Activated naive CD8-positive, alpha-beta T cell treated with anti-CD3 and anti-CD28 coated beads, Interleukin-2, amount 10 ng/mL, durations not matched to agents 7 days and 5 days (primary cell): ENCODE measurements at regions of chr2 and their contacts with region 1.

Region 1: DNA sequence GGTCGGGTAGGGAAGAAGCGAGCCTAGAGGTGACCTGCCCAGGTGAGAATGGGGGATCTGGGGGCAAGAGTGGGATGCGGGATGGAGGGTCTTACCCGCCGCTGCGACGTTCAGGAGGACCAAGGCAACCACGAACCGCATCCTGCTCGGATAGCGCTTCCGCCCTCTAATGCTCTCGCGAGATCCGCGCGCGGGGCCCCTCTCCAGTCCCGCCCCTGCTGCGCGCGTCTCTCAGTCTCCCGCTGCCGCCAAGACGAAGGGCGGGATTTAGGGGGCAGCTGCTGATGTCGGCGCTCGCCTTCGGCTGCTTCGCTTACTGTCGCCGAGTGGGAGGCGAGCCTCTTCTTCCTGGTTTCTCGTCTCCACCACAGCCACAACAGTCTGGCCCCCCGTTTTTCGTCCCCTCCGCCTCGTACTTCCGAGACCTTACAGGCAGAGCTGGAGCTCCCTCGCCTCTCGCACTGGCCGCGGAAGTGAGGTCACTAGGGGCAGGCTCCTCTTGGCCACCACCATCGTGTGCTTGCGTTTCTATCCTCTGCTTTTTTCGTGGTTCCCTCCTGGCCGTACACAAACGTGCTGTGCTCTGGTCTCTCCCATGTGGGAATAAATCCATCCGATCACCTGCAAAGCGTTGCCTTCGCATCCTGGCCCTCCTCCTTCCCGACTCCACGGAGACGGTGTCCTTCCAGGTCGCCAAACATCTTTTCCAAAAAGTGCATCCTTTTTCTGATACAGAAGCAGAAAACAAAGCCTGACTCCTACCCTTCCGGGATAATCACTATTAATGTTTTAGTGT is at the start of gene TGOLN2:
- DNase-seq: peak; percentile 97
- ATAC-seq: peak; percentile 84
- H3K4me3 Mint-ChIP-seq: peak within 1 kb of the TSS; percentile 99
- H3K27ac Mint-ChIP-seq: peak within 1 kb of the TSS; percentile 100
- H3K4me1 Mint-ChIP-seq: peaks cover 25% of the 10 kb centered on the region
- H3K27me3 Mint-ChIP-seq: no peaks in the 10 kb centered on the region
- total RNA-seq, gene TGOLN2: 144 to 148 TPM

Region 2: GRCh38 chr2:85273738-85274731 is 54.0 kb before region 1 on chr2:
- POLR2A ChIA-PET with region 1: no interaction called
- DNase-seq: no peak
- ATAC-seq: no peak
- H3K4me3 Mint-ChIP-seq: no peak overlapping the region
- H3K27ac Mint-ChIP-seq: no peak overlapping the region
- H3K4me1 Mint-ChIP-seq: no peaks in the 10 kb centered on the region
- H3K27me3 Mint-ChIP-seq: peaks cover 32% of the 10 kb centered on the region

Region 3: DNA sequence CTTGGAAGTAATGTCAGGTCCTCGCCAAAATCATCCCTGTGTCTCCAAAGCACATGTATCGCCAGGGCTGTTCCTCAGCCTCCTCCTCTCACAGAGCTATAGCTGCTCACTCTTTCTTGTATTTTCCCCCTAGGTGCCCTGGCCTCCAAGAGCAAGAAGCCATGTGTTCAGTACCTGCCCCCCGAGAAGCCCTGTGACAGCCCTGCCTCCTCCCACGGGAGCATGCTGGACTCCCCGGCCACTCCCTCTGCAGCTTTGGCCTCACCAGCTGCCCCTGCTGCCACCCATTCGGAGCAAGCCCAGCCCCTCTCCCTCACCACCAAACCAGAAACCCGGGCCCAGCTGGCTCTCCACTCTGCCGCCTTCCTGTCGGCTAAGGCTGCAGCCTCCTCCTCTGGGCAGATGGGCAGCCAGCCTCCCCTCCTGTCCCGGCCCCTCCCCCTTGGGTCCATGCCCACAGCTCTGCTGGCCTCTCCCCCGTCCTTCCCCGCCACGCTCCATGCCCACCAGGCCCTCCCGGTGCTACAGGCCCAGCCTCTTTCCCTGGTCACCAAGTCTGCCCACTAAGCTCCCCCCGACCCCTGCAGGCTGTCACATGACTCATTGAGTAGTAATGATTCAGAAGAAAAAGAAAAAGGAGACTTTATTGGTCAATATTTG is 19.0 kb before region 1 on chr2:
- POLR2A ChIA-PET with region 1: interaction called, 35 read pairs
- DNase-seq: no peak
- ATAC-seq: no peak
- H3K4me3 Mint-ChIP-seq: peak overlapping the region; percentile 75
- H3K27ac Mint-ChIP-seq: peak overlapping the region; percentile 59
- H3K4me1 Mint-ChIP-seq: peaks cover 21% of the 10 kb centered on the region
- H3K27me3 Mint-ChIP-seq: peaks cover 5% of the 10 kb centered on the region

Region 4: GRCh38 chr2:85354286-85355072 is 26.5 kb after region 1 on chr2 and contains the starts of genes ELMOD3 and RETSAT:
- POLR2A ChIA-PET with region 1: interaction called, 84 read pairs
- DNase-seq: peak; percentile 90
- ATAC-seq: peak; percentile 100
- H3K4me3 Mint-ChIP-seq: peak within 1 kb of the TSS; percentile 92
- H3K27ac Mint-ChIP-seq: peak within 1 kb of the TSS; percentile 95
- H3K4me1 Mint-ChIP-seq: peaks cover 29% of the 10 kb centered on the region
- H3K27me3 Mint-ChIP-seq: no peaks in the 10 kb centered on the region
- total RNA-seq, gene ELMOD3: 23.1 to 26.4 TPM
- total RNA-seq, gene RETSAT: 28.8 to 29.7 TPM

Region 5: DNA sequence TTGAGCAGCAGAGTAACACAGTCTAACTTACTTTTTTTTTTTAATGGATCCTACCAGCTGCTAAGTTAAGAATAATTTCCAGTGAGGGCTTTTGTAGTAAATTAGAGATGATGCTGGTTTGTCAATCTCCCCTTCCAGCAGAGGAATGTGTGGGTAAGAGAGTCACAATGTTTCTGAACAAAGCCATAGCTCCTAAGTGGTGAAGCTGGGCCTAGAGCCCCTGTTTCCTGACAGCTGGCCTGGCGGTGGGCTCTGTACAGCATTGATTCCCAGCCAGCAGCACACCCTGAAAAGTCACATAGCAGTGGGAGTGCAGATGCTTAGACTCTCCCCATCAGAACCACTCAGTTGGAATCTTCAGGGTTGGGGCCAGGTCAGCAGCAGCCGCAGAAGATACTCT is 57.7 kb after region 1 on chr2:
- POLR2A ChIA-PET with region 1: no interaction called
- DNase-seq: no peak
- ATAC-seq: no peak
- H3K4me3 Mint-ChIP-seq: no peak overlapping the region
- H3K27ac Mint-ChIP-seq: no peak overlapping the region
- H3K4me1 Mint-ChIP-seq: peaks cover 4% of the 10 kb centered on the region
- H3K27me3 Mint-ChIP-seq: no peaks in the 10 kb centered on the region

Region 6: DNA sequence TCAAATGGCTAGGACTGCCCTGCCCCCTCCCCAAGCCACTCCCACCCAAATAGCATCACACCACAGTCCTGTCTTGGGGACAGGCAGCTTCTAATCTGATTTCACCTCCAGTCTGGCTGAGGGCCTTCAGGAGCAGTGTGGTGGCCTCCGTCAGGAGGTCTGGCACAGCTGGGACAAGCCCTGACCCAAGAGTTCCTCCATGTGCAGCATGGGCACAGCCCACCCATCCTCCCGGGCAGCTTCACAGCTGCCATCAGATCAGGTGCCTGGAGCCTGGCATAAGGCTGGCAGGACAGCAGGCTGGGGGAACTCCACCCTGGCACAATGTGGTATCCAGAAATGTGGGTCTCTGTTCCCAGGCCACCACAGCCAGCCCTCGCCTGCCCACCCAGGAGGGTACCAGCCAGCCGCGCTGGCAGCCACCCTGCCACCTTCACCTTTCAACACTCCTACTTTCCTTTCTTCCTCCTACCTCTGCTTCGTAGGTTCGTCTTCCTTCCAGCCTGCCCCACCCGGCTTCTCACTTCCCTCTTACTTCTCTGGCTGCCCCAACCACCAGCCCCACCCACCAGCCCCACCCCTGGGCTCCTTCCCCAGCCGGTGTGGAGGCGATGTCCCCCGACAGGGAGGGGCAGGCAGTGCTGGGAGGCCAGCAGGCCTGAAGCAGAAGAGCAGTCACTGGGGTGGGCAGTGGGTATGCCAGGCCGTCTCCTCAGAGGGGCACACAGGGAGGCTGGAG is 82.0 kb after region 1 on chr2 and contains the start of gene CAPG:
- POLR2A ChIA-PET with region 1: interaction called, 16 read pairs
- DNase-seq: peak; percentile 73
- ATAC-seq: peak; percentile 42
- H3K4me3 Mint-ChIP-seq: peak within 1 kb of the TSS; percentile 88
- H3K27ac Mint-ChIP-seq: peak within 1 kb of the TSS; percentile 82
- H3K4me1 Mint-ChIP-seq: peaks cover 60% of the 10 kb centered on the region
- H3K27me3 Mint-ChIP-seq: peaks cover 4% of the 10 kb centered on the region
- total RNA-seq, gene CAPG: 263 to 279 TPM